ENCODE measurements at regions of chr7 and their contacts with region 1.

Region 1: GRCh38 chr7:26365077-26365900 is 73.6 kb downstream of the SNX10 start:
- DNase-seq: peak; percentile 51
- H3K4me3 Mint-ChIP-seq: no peak overlapping the region
- H3K27ac Mint-ChIP-seq: peak overlapping the region; percentile 31
- H3K4me1 Mint-ChIP-seq: peaks cover 12% of the 10 kb centered on the region
- H3K27me3 Mint-ChIP-seq: no peaks in the 10 kb centered on the region

Region 2: DNA sequence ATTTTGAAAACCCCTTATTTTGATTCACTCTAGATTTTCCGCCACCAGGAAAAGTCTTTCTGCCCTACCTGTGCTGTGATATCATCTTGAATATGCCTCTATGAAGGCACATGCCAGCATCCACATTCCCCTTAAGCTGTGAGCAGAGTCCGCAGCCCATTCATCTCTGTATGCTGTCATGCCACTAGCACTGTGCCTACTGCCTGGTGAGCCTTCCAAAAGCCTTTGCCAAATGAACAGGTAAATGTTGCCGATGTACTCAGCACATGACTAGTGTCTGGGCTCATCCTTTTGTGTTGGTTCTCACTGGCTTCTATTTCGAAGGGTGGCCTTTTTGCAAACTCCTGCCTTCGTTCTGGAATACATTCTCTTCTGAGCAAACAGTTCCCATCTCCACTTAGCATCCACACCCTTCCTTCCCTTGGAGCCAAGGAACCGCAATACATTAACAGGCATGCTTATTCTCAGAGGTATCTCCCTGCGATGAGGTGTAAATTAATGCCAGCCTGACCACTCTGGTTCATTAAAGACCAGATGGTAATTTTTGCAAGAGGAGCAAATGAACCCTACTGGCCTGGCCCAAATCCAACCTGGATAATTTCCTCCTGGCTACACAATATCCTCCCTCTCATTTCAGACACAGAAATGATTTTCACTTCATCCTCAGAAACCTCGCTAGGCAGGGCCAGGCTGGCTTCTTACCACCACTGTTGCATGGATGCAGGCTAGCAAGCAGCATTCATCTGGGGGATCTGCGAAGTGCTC is 553.0 kb before region 1 on chr7:
- CTCF ChIA-PET with region 1: no interaction called
- POLR2A ChIA-PET with region 1: no interaction called
- intact Hi-C with region 1: no loop called
- DNase-seq: no peak
- H3K4me3 Mint-ChIP-seq: no peak overlapping the region
- H3K27ac Mint-ChIP-seq: no peak overlapping the region
- H3K4me1 Mint-ChIP-seq: no peaks in the 10 kb centered on the region
- H3K27me3 Mint-ChIP-seq: peaks cover 21% of the 10 kb centered on the region

Region 3: GRCh38 chr7:26078437-26079336 is 286.6 kb before region 1 on chr7:
- CTCF ChIA-PET with region 1: interaction called, 30 read pairs
- POLR2A ChIA-PET with region 1: no interaction called
- intact Hi-C with region 1: loop called (anchors 5 kb)
- DNase-seq: peak; percentile 87
- H3K4me3 Mint-ChIP-seq: no peak overlapping the region
- H3K27ac Mint-ChIP-seq: no peak overlapping the region
- H3K4me1 Mint-ChIP-seq: peaks cover 4% of the 10 kb centered on the region
- H3K27me3 Mint-ChIP-seq: peaks cover 24% of the 10 kb centered on the region

Region 4: GRCh38 chr7:26376175-26376917 is 11.1 kb after region 1 on chr7:
- CTCF ChIA-PET with region 1: interaction called, 21 read pairs
- POLR2A ChIA-PET with region 1: no interaction called
- intact Hi-C with region 1: no loop called
- DNase-seq: peak; percentile 56
- H3K4me3 Mint-ChIP-seq: peak overlapping the region; percentile 73
- H3K27ac Mint-ChIP-seq: no peak overlapping the region
- H3K4me1 Mint-ChIP-seq: no peaks in the 10 kb centered on the region
- H3K27me3 Mint-ChIP-seq: peaks cover 27% of the 10 kb centered on the region

Region 5: DNA sequence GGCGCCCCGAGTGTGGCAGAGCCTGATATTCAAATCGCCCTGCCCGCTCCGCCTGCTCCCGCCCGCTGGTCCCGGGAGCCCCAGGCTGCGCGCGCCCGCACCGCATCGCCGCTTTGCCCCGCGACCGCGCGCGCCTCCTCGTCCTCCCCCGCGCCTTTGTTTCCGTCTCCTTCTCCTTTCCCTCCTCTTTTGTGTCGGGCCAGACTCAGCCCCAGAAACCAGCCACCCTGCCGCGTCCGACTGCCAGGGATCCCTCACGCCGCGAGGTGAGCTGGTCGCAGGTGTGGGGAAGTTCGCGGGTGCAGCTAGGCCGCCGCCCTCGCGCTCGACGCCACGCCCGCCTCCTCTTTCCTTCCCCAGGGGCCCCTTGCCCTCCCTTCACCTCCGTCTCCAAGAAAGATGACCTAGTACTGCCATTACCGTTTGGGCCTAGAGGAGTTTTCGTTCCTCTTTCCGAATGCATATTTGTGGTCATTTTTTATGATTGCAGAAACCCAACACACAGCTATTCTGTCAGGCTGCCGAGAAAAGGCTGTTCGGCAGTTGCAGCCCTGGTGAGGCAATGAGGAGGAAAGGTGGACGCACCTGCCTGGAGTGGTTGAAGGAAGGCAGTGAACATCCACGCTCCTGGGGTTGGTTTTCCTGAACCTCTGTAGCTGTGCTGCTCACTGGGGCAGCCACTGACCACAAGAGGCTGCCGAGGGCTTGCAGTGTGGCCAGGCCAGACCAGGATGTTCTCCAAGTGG is 33.6 kb after region 1 on chr7:
- CTCF ChIA-PET with region 1: interaction called, 13 read pairs
- POLR2A ChIA-PET with region 1: no interaction called
- intact Hi-C with region 1: no loop called
- DNase-seq: peak; percentile 70
- H3K4me3 Mint-ChIP-seq: peak overlapping the region; percentile 86
- H3K27ac Mint-ChIP-seq: peak overlapping the region; percentile 64
- H3K4me1 Mint-ChIP-seq: peaks cover 13% of the 10 kb centered on the region
- H3K27me3 Mint-ChIP-seq: peaks cover 41% of the 10 kb centered on the region

Region 6: DNA sequence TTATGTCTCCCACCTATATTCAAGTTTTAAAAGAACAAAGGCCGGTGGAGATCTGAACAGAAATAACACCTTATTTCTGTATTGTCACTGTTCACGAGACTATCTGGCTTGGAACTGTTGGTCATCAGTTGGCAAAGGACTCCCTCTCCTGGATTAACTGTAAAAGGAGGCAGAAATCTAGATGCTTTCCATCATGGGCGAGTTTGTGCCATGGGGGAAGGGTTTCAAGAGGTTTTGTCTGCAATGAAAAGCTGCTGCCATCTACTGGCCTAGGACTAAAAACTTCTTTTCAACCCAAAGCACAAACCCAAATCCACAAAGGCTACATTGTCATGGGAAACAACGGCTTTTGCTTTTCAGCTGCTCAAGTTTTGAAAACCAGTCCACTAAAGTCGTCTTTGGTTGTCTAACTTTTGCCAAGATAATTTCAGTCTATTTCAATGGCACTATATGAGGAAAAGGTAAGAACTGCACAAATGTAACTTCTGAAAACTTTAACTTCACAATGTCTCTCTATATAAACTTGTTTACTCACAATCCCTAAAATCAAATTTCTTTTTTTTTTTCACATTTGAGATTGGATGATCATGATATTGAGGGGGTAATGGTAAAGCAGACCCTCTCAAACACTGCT is 302.3 kb after region 1 on chr7:
- CTCF ChIA-PET with region 1: interaction called, 48 read pairs
- POLR2A ChIA-PET with region 1: no interaction called
- intact Hi-C with region 1: loop called (anchors 1 kb)
- DNase-seq: peak; percentile 61
- H3K4me3 Mint-ChIP-seq: no peak overlapping the region
- H3K27ac Mint-ChIP-seq: no peak overlapping the region
- H3K4me1 Mint-ChIP-seq: peaks cover 19% of the 10 kb centered on the region
- H3K27me3 Mint-ChIP-seq: no peaks in the 10 kb centered on the region

Region 7: DNA sequence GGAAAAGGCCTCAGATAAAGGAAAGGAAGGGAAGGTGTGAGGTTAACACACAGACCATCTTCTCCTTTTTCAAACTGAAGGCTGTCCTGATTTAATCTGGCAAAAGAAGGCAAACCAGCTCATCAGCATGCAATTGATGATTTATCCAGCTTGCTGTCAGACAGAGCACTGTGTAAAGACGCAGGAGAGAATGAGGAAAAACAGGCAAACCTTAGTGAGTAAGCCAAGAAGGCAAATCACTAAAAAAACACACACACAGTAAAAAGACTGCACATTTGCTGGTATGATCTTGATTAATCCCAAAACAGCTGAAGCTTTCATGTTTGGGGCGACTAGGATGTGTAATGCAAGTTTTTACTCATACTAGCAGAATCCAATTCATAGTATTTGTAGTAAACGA is 564.9 kb after region 1 on chr7:
- CTCF ChIA-PET with region 1: no interaction called
- POLR2A ChIA-PET with region 1: no interaction called
- intact Hi-C with region 1: no loop called
- DNase-seq: no peak
- H3K4me3 Mint-ChIP-seq: no peak overlapping the region
- H3K27ac Mint-ChIP-seq: no peak overlapping the region
- H3K4me1 Mint-ChIP-seq: no peaks in the 10 kb centered on the region
- H3K27me3 Mint-ChIP-seq: peaks cover 12% of the 10 kb centered on the region

Measured in activated CD4-positive, alpha-beta memory T cell treated with anti-CD3 and anti-CD28 coated beads for 36 hours (primary cell).